ENCODE measurements at regions of chr15 and their contacts with region 1.

Region 1: GRCh38 chr15:90665288-90666134 is 51.6 kb upstream of the BLM start:
- DNase-seq: peak; percentile 69
- H3K4me3 Mint-ChIP-seq: peak overlapping the region; percentile 77
- H3K27ac Mint-ChIP-seq: peak overlapping the region; percentile 37
- H3K4me1 Mint-ChIP-seq: peaks cover 14% of the 10 kb centered on the region
- H3K27me3 Mint-ChIP-seq: peaks cover 22% of the 10 kb centered on the region
- CTCF ChIP-seq: no peak

Region 2: GRCh38 chr15:90716976-90717821 is 51.7 kb after region 1 on chr15 and contains the start of gene BLM:
- CTCF ChIA-PET with region 1: no interaction called
- intact Hi-C with region 1: loop called (anchors 5 kb)
- DNase-seq: peak; percentile 96
- H3K4me3 Mint-ChIP-seq: peak within 1 kb of the TSS; percentile 98
- H3K27ac Mint-ChIP-seq: peak within 1 kb of the TSS; percentile 95
- H3K4me1 Mint-ChIP-seq: peaks cover 26% of the 10 kb centered on the region
- H3K27me3 Mint-ChIP-seq: no peaks in the 10 kb centered on the region
- CTCF ChIP-seq: peak; percentile 20
- total RNA-seq, gene BLM: 26.7 and 31.8 TPM in 2 replicates

Region 3: DNA sequence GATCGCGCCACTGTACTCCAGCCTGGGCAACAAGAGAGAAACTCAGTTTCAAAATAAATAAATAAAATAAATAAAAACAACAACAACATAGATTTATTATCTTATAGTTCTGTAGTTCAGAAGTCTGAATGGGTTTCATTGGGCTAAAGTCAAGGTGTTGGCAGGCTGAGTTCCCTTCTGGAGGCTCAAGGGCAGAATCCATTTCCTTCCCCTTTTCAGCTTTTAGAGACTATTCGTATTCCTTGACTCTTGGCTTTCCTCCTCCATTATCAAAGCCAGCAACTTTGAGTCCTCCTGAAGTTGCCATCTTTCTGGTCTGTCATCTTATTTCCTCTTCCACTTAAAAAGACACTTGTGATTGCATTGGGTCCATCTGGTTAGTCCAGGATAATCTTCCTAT is 63.8 kb after region 1 on chr15:
- CTCF ChIA-PET with region 1: no interaction called
- intact Hi-C with region 1: no loop called
- DNase-seq: no peak
- H3K4me3 Mint-ChIP-seq: no peak overlapping the region
- H3K27ac Mint-ChIP-seq: peak overlapping the region; percentile 58
- H3K4me1 Mint-ChIP-seq: no peaks in the 10 kb centered on the region
- H3K27me3 Mint-ChIP-seq: no peaks in the 10 kb centered on the region
- CTCF ChIP-seq: no peak